Activated CD4-positive, alpha-beta memory T cell treated with anti-CD3 and anti-CD28 coated beads, Interleukin-2, amount 10 ng/mL, durations not matched to agents 7 days and 5 days (primary cell): ENCODE measurements at regions of chr1 and their contacts with region 1.

Region 1: GRCh38 chr1:224392411-224393249 is 36.0 kb downstream of the CNIH4 start:
- DNase-seq: no peak
- H3K4me3 Mint-ChIP-seq: no peak overlapping the region
- H3K27ac Mint-ChIP-seq: peak overlapping the region; percentile 14
- H3K4me1 Mint-ChIP-seq: peaks cover 26% of the 10 kb centered on the region
- H3K27me3 Mint-ChIP-seq: no peaks in the 10 kb centered on the region

Region 2: DNA sequence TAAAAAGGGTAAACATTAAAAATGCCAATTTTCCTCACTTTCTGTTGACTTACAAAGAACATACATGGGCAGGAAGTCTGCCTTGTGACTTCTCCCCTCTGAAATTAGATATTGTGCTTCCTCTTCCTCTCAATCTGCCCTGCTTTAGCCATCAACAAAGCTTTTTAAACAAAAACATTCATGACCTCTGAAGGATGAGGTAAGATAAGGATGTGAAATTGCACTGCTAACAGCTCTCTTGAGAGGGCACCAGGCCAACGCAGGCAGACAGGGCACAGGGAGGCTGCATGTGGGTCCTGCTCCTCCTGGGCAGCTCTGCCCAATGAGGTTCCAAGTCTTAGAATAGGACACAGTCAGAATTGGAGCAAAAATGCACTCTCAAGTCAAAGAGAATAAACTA is 147.4 kb before region 1 on chr1:
- CTCF ChIA-PET with region 1: no interaction called
- POLR2A ChIA-PET with region 1: no interaction called
- DNase-seq: peak; percentile 60
- H3K4me3 Mint-ChIP-seq: no peak overlapping the region
- H3K27ac Mint-ChIP-seq: peak overlapping the region; percentile 88
- H3K4me1 Mint-ChIP-seq: peaks cover 23% of the 10 kb centered on the region
- H3K27me3 Mint-ChIP-seq: no peaks in the 10 kb centered on the region

Region 3: DNA sequence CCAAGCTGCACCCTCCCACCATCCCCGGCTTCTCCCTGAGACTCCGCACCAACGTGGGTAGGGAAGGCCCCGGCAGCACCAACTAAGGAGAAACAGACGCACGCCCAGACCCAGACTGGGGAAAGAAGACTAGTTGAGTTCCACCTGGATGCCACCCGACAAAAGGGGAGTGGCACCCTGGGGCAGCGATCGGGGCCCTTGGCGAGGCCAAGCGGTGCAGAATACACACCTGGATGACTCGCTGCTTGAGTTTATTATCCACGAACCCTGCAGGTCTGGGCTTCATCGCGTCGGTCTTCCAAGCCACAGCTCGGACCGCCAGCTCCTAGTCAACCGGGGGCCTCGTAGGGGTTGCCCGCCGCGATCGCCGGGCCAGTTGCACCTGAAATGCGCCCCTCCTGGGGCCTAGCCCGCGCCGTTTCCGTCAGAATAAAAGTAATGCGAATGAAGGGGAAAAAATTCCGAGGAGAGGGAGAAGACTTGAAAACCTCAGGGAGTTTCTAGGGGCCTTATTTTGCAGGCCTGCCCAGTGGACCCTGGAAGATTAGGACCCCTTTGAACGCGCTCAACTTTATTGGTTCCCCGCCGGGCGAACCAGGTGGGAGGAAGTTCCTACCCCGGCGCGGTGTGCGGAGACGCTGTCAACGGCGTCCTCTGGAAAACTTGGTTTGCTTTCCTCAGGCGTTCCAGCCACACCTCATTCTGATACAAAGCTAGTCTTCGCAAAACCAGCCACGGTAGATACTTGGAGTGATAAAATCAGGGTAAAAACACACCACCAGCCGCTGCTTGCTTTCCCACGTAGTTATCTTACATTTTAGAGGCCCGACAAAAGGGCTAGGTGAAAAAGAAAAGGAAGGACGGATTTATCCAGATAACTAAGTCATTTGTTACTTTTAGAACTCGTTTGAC is 62.5 kb before region 1 on chr1 and contains the start of gene NVL:
- CTCF ChIA-PET with region 1: no interaction called
- POLR2A ChIA-PET with region 1: no interaction called
- DNase-seq: peak; percentile 83
- H3K4me3 Mint-ChIP-seq: peak within 1 kb of the TSS; percentile 88
- H3K27ac Mint-ChIP-seq: peak within 1 kb of the TSS; percentile 94
- H3K4me1 Mint-ChIP-seq: peaks cover 58% of the 10 kb centered on the region
- H3K27me3 Mint-ChIP-seq: no peaks in the 10 kb centered on the region
- total RNA-seq, gene NVL: 38.8 to 45.6 TPM

Region 4: DNA sequence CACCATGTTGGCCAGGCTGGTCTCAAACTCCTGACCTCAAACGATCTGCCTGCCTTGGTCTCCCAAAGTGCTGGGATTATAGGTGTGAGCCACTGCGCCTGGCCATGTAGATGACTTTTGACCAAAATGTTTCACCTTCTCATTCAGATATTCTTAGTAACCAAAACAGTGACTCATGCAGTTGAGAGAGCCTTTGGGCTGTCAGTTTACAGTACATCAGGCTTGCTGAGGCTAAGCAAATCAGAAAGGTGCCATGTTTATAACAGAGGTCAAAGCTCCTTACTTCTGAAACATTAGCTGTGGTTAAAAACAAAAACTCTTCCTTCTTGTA is 15.0 kb before region 1 on chr1:
- CTCF ChIA-PET with region 1: interaction called, 5 read pairs
- POLR2A ChIA-PET with region 1: interaction called, 18 read pairs
- DNase-seq: peak; percentile 49
- H3K4me3 Mint-ChIP-seq: peak overlapping the region; percentile 25
- H3K27ac Mint-ChIP-seq: peak overlapping the region; percentile 89
- H3K4me1 Mint-ChIP-seq: peaks cover 93% of the 10 kb centered on the region
- H3K27me3 Mint-ChIP-seq: no peaks in the 10 kb centered on the region